Heart left ventricle (tissue), 16 donors: ENCODE measurements at regions of chr1 and their contacts with region 1.

Region 1: GRCh38 chr1:16078925-16079656 is 5.6 kb upstream of the FAM131C start:
- DNase-seq: peak; percentile 69 to 83 (median 76)
- ATAC-seq: peak; percentile 37 to 71 (median 58)
- H3K4me3 ChIP-seq: peak overlapping the region in 1 of 12 donors; percentile 34
- H3K27ac ChIP-seq: peak overlapping the region in 3 of 12 donors; percentile 18 to 50 (median 46)
- H3K4me1 ChIP-seq: peaks cover 0 to 50% (median 18%) of the 10 kb centered on the region in 12 donors
- H3K27me3 ChIP-seq: peaks cover 0 to 4% (median 0%) of the 10 kb centered on the region in 9 donors
- CTCF ChIP-seq: peak; percentile 73 to 95 (median 88)
- POLR2A ChIP-seq: no peak

Region 2: GRCh38 chr1:16146279-16147155 is 67.4 kb after region 1 on chr1:
- intact Hi-C with region 1: loop called in 3 of 10 experiments (anchors 5 kb)
- DNase-seq: peak; percentile 88 to 91 (median 89)
- ATAC-seq: peak; percentile 47 to 73 (median 62)
- H3K4me3 ChIP-seq: peak overlapping the region in 11 of 12 donors; percentile 1 to 52 (median 36)
- H3K27ac ChIP-seq: peak overlapping the region; percentile 85 to 99 (median 93)
- H3K4me1 ChIP-seq: peaks cover 27 to 89% (median 77%) of the 10 kb centered on the region in 12 donors
- H3K27me3 ChIP-seq: no peaks in the 10 kb centered on the region
- CTCF ChIP-seq: peak in 1 of 12 donors; percentile 15
- POLR2A ChIP-seq: peak in 1 of 2 donors; percentile 60

Region 3: GRCh38 chr1:16155532-16156410 is 76.7 kb after region 1 on chr1 and contains the start of gene EPHA2:
- intact Hi-C with region 1: loop called in 6 of 10 experiments (anchors 1 to 5 kb)
- DNase-seq: peak; percentile 90 to 96 (median 93)
- ATAC-seq: peak; percentile 44 to 80 (median 75)
- H3K4me3 ChIP-seq: peak within 1 kb of the TSS; percentile 68 to 96 (median 88)
- H3K27ac ChIP-seq: peak within 1 kb of the TSS; percentile 85 to 96 (median 92)
- H3K4me1 ChIP-seq: peaks cover 9 to 63% (median 46%) of the 10 kb centered on the region in 12 donors
- H3K27me3 ChIP-seq: peaks cover 0 to 13% (median 0%) of the 10 kb centered on the region in 9 donors
- CTCF ChIP-seq: no peak
- POLR2A ChIP-seq: peak; percentile 81 to 99
- total RNA-seq, gene EPHA2: 7.6 to 34.7 (median 14.8) TPM

Region 4: GRCh38 chr1:16187748-16188401 is 108.8 kb after region 1 on chr1:
- intact Hi-C with region 1: loop called (anchors 1 to 2 kb)
- DNase-seq: peak; percentile 71 to 88 (median 73)
- ATAC-seq: peak; percentile 57 to 85 (median 77)
- H3K4me3 ChIP-seq: no peak overlapping the region
- H3K27ac ChIP-seq: no peak overlapping the region
- H3K4me1 ChIP-seq: peaks cover 0 to 20% (median 4%) of the 10 kb centered on the region in 12 donors
- H3K27me3 ChIP-seq: no peaks in the 10 kb centered on the region
- CTCF ChIP-seq: peak; percentile 94 to 99 (median 97)
- POLR2A ChIP-seq: no peak

Region 5: DNA sequence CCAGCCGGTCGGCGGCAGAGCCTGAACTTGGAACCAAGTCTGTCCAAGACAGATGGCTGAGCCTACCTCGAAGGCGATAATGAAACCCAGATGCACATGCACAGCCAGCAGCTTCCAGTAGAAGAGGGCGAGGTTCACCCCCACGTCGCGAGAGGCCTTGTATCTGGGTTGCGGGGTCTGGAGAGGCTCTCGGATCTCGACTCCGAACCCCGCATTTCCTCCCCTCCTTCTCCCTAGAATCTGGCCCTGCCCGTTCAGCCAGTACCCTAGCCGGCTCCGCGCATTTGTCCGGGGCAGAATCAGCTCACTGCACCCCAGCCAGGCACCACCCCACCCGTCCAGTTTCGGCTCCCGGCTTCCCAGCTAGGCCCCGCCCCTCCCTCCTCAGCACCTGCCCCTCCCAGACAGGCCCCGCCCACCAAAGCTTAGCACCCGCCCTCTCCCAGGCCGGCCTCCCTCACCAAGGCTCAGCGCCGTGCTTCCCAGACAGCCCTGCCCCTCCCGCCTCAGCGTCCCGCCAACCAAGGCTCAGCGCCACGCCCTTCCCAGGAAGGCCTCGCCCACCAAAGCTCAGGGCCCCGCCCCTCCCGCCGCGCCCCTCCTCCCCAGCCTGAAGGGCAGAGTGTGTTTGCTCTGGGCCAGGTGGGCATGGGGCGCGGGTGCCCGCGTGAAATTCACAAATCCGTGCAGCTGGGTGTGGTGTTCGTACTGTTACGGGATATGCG is 138.1 kb after region 1 on chr1:
- intact Hi-C with region 1: no loop called
- DNase-seq: peak; percentile 99 to 100 (median 99)
- ATAC-seq: peak; percentile 97 to 99 (median 98)
- H3K4me3 ChIP-seq: peak overlapping the region; percentile 40 to 77 (median 56)
- H3K27ac ChIP-seq: peak overlapping the region in 10 of 12 donors; percentile 49 to 79 (median 61)
- H3K4me1 ChIP-seq: peaks cover 0 to 25% (median 13%) of the 10 kb centered on the region in 12 donors
- H3K27me3 ChIP-seq: no peaks in the 10 kb centered on the region
- CTCF ChIP-seq: no peak
- POLR2A ChIP-seq: peak in 1 of 2 donors; percentile 38

Region 6: DNA sequence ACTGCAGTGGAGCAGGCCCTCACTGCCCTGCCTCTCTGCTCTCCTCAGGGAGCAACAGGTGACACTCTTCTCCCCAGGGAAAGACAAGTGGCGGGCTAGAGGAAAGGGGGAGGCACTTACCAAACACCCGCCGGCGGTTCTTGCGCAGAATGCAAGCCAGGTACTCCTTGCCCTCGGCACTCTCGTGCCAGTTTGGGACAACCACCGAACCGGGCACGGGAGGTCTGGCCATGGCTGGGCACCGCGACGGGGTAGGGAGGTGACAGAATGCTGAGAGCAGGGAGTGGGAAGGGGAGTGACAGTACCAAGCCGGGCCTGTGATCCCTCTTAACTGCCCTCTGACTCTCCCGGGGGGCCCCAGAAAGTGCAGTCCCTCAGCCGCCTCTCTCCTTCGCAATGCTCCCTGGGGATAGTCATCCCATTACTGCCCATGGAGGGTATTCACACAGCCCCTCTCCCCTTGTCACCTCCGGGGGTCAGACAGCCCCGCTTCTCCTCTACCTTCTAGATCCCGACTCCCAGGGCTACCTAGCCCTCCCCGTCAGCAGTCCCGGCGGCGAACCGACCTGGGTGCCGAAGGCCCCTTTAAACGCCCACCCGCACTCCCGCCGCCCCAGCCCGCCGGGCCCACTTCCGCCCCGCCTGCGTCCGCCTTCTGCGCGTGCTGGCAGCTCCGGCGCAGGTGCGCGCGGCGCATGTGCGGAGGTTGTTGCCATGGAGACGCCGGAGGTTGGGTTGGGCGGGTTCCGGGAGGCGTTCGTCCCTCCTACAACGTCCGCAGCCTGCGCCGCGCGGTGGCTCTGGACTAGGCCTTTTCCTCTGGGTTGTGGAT is 157.6 kb after region 1 on chr1 and contains the start of gene CPLANE2:
- intact Hi-C with region 1: loop called in 4 of 10 experiments (anchors 5 kb)
- DNase-seq: peak; percentile 95 to 97 (median 96)
- ATAC-seq: peak; percentile 81 to 96 (median 96)
- H3K4me3 ChIP-seq: peak within 1 kb of the TSS; percentile 49 to 81 (median 68)
- H3K27ac ChIP-seq: peak within 1 kb of the TSS; percentile 61 to 94 (median 86)
- H3K4me1 ChIP-seq: peaks cover 0 to 22% (median 16%) of the 10 kb centered on the region in 12 donors
- H3K27me3 ChIP-seq: no peaks in the 10 kb centered on the region
- CTCF ChIP-seq: peak in 3 of 12 donors; percentile 24 to 33 (median 28)
- POLR2A ChIP-seq: peak in 1 of 2 donors; percentile 88
- total RNA-seq, gene CPLANE2: 3.6 to 9.9 (median 5.7) TPM

Region 7: GRCh38 chr1:16243936-16244649 is 165.0 kb after region 1 on chr1:
- intact Hi-C with region 1: loop called (anchors 2 to 5 kb)
- DNase-seq: peak; percentile 64 to 80 (median 74)
- ATAC-seq: peak in 3 of 4 donors; percentile 34 to 43 (median 37)
- H3K4me3 ChIP-seq: no peak overlapping the region
- H3K27ac ChIP-seq: peak overlapping the region in 4 of 12 donors; percentile 17 to 48 (median 26)
- H3K4me1 ChIP-seq: peaks cover 5 to 39% (median 26%) of the 10 kb centered on the region in 12 donors
- H3K27me3 ChIP-seq: no peaks in the 10 kb centered on the region
- CTCF ChIP-seq: peak; percentile 74 to 86 (median 80)
- POLR2A ChIP-seq: no peak